Aorta (tissue), 5 donors: ENCODE measurements at regions of chr5 and their contacts with region 1.

Region 1: GRCh38 chr5:173887610-173888472 is at the start of gene CPEB4:
- DNase-seq: peak; percentile 98 to 99
- ATAC-seq: peak; percentile 97
- H3K4me3 ChIP-seq: peak within 1 kb of the TSS; percentile 97 to 99
- H3K27ac ChIP-seq: peak within 1 kb of the TSS; percentile 58 to 96
- H3K4me1 ChIP-seq: no peaks in the 10 kb centered on the region
- H3K27me3 ChIP-seq: no peaks in the 10 kb centered on the region
- total RNA-seq, gene CPEB4: 50.4 to 80.1 TPM

Region 2: DNA sequence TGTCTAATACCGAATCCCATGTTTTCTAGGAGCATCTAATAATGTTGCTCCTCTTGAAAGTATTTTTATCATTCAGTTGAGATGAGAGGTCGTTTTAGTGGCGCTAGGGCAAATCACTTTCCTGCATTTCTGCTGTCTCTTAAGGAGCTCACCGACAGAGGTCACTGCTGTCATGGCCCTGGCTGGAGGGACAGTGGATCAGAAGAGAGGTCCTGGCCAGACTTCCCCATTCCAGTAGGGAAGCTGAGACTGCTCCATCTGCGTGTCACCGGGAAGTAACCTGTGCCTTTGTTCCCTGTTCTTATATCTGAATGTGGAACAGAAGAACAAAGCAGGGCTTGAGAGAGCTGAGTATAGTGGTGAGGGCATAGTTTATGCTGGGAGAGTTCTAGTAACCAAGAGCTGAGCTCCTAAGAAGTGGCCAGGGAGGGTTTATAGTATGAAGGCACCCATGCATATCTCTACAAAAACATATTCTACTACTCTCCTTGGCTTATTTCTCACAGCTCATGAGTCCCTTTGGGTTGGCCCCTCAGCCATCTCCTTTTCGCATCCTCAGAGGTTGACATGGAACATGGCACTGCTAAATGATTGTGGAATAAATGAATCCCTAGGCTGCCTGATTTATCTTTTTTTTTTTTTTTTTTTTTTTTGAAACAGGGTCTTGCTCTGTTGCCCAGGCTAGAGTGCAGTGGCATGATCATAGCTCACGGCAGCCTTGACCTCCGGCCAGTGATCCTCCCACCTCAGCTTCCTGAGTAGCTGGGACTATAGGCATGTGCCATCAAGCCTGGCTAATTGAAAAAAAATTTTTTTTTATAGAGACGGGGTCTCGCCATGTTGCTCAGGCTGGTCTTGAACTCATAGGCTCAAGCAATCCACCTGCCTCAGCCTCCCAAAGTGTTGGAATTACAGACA is 877.0 kb before region 1 on chr5:
- intact Hi-C with region 1: no loop called
- DNase-seq: peak in 1 of 2 donors; percentile 74
- ATAC-seq: peak; percentile 59
- H3K4me3 ChIP-seq: no peak overlapping the region
- H3K27ac ChIP-seq: no peak overlapping the region
- H3K4me1 ChIP-seq: peaks cover 2 to 3% of the 10 kb centered on the region in 2 donors
- H3K27me3 ChIP-seq: no peaks in the 10 kb centered on the region

Region 3: GRCh38 chr5:173615884-173616576 is 271.8 kb before region 1 on chr5:
- intact Hi-C with region 1: loop called (anchors 1 to 5 kb)
- DNase-seq: peak; percentile 63 to 82
- ATAC-seq: peak; percentile 79
- H3K4me3 ChIP-seq: peak overlapping the region; percentile 86 to 99
- H3K27ac ChIP-seq: peak overlapping the region; percentile 60 to 91
- H3K4me1 ChIP-seq: no peaks in the 10 kb centered on the region
- H3K27me3 ChIP-seq: no peaks in the 10 kb centered on the region

Region 4: GRCh38 chr5:173764321-173765029 is 123.4 kb before region 1 on chr5:
- intact Hi-C with region 1: loop called in 1 of 2 experiments (anchors 10 kb)
- DNase-seq: peak; percentile 92
- ATAC-seq: peak; percentile 74
- H3K4me3 ChIP-seq: no peak overlapping the region
- H3K27ac ChIP-seq: no peak overlapping the region
- H3K4me1 ChIP-seq: peaks cover 0 to 3% of the 10 kb centered on the region in 2 donors
- H3K27me3 ChIP-seq: no peaks in the 10 kb centered on the region

Region 5: GRCh38 chr5:173919443-173919842 is 31.6 kb after region 1 on chr5:
- intact Hi-C with region 1: loop called in 1 of 2 experiments (anchors 1 kb)
- DNase-seq: no peak
- ATAC-seq: no peak
- H3K4me3 ChIP-seq: no peak overlapping the region
- H3K27ac ChIP-seq: no peak overlapping the region
- H3K4me1 ChIP-seq: peaks cover 1 to 15% of the 10 kb centered on the region in 2 donors
- H3K27me3 ChIP-seq: no peaks in the 10 kb centered on the region

Region 6: DNA sequence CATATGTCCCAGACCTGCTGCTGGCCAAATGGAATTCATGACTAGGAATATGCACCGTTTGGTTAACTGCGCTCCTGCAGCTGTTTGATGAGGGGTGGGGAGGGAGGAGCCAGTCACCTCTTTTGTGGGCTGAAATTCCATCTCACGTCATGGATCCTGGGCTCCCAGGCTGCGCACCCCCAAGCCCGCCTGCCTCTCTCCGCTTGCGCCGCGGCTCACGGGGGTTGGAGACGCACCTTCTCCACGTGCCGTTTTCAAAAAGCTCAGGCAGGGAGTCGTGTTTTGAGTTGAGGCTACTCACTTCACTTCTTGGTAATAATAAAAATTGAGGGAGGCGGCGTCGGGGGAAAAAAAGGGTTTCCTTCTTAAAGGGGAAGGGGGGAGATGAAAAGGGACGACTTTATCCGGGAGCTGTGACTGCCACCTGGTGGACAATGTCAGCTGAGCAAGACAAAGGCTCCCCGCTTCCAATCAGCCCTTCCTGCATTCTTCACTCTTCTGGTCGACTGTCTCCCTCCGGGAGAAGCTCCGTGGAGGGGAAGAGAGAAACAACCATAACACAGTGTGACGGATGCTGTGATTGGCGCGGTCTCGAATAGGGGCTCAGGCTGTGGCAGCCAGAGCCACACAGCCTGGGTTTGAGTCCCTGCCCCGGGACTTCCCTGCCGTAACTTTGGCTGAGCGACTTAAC is 85.2 kb after region 1 on chr5:
- intact Hi-C with region 1: loop called (anchors 2 to 5 kb)
- DNase-seq: peak; percentile 86 to 92
- ATAC-seq: peak; percentile 93
- H3K4me3 ChIP-seq: peak overlapping the region; percentile 5 to 27
- H3K27ac ChIP-seq: no peak overlapping the region
- H3K4me1 ChIP-seq: peaks cover 0 to 1% of the 10 kb centered on the region in 2 donors
- H3K27me3 ChIP-seq: no peaks in the 10 kb centered on the region